ENCODE measurements at regions of chr1 and their contacts with region 1.

Region 1: DNA sequence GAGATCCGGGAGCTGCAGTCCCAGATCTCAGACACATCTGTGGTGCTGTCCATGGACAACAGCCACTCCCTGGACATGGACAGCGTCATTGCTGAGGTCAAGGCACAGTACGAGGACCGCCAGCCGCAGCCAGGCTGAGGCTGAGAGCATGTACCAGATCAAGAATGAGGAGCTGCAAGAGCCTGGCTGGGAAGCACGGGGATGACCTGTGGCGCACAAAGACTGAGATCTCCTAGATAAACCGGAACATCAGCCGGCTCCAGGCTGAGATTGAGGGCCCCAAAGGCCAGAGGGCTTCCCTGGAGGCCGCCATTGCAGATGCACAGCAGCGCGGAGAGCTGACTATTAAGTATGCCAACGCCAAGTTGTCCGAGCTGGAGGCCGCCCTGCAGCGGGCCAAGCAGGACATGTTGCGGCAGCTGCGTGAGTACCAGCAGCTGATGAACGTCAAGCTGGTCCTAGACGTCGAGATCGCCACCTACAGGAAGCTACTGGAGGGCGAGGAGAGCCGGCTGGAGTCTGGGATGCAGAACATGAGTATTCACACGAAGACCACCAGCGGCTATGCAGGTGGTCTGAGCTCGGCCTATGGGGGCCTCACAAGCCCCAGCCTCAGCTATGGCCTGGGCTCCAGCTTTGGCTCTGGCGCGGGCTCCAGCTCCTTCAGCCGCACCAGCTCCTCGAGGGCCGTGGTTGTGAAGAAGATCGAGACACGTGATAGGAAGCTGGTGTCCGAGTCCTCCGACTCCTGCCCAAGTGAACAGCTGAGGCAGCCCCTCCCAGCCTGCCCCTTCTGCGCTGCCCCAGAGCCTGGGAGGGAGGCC is 25.5 kb downstream of the ETV3L start:
- DNase-seq: peak; percentile 54
- H3K4me3 ChIP-seq: no peak overlapping the region
- H3K27ac ChIP-seq: no peak overlapping the region
- H3K4me1 ChIP-seq: no peaks in the 10 kb centered on the region
- H3K27me3 ChIP-seq: peaks cover 2% of the 10 kb centered on the region
- CTCF ChIP-seq: peak; percentile 39 to 64

Region 2: DNA sequence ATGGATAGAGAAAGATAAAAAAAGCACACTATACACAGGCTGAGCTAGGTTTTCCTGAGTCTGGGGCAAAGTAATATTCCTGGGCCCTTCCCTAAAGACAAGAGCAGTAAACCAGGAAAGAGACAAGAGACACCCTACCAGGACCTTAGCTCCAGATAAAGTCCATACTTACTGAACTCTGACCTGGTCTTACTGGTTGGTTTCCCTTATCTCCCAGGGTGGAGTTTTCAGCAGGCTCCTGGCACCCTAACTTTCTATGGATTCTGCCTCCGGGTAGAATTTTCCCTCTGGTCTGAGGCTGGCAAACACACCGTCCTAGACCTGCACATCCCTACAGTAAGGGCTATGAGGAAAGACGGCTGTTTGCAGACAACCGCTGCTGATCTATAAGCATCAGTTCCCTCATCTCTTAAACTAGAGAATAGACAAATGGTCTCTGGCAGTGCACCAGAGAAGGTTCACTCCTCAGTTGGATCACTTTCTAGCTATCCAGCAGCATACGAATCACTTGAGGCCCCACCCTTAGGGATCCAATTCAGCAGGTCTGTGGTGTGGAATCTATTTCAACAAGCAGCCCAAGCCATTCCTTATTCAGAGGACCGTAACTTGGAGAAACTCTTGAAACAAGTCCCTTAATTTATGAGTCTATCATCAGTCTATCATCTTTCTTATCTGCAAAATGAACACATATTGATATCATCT is 80.6 kb before region 1 on chr1:
- CTCF ChIA-PET with region 1: no interaction called
- dilution Hi-C with region 1: no loop called
- in situ Hi-C with region 1: no loop called
- intact Hi-C with region 1: loop called (anchors 5 kb)
- DNase-seq: peak; percentile 12
- H3K4me3 ChIP-seq: no peak overlapping the region
- H3K27ac ChIP-seq: no peak overlapping the region
- H3K4me1 ChIP-seq: peaks cover 16% of the 10 kb centered on the region
- H3K27me3 ChIP-seq: no peaks in the 10 kb centered on the region
- CTCF ChIP-seq: no peak

Region 3: DNA sequence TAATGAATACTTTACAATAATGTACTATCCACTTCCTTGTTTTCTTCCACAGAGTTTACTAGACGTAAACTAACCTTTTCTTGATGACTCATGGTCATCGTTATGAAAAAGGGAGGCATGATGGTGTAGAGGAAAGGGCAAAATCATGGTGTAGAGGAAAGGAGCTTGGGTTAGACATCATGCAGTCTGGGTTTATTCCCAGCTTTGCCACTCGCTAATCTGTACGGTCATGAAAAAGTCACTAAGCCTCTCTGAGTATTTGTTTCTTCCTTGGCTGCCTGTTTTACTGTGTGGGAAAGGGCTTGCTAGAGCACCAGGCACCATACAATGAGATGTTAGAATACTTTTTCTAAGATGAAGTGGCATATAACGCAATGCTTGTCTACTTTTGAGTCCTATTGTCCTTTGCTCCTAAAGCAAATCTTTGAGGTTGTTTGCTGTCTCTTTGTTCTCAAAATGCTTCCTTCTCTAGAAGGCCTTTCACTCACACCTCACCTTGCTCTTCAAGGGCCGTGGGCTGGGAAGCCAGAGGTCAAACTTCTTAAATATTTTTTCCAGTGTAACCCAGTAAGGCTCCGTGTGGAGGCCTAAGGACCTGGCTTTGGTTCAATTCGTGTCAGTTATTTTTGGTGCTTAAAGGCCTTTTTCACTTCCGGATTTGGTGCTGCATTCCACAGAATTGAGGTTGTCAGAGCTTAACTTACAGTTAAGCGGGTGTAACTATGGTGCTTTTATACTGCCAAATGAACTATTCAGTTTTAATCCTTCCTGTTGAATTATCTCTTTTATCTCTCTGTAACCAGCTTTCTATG is 74.0 kb after region 1 on chr1:
- CTCF ChIA-PET with region 1: no interaction called
- dilution Hi-C with region 1: loop called (anchors 5 kb)
- in situ Hi-C with region 1: no loop called
- intact Hi-C with region 1: no loop called
- DNase-seq: no peak
- H3K4me3 ChIP-seq: no peak overlapping the region
- H3K27ac ChIP-seq: no peak overlapping the region
- H3K4me1 ChIP-seq: peaks cover 18% of the 10 kb centered on the region
- H3K27me3 ChIP-seq: no peaks in the 10 kb centered on the region
- CTCF ChIP-seq: no peak

Measured in mammary epithelial cell (primary cell).